ENCODE measurements at regions of chr3 and their contacts with region 1.

Region 1: GRCh38 chr3:100254168-100254777 is 6.5 kb upstream of the TBC1D23 start:
- DNase-seq: peak; percentile 43 to 58
- H3K4me3 ChIP-seq: no peak overlapping the region
- H3K27ac ChIP-seq: no peak overlapping the region
- H3K4me1 ChIP-seq: no peaks in the 10 kb centered on the region
- H3K27me3 ChIP-seq: no peaks in the 10 kb centered on the region
- CTCF ChIP-seq: peak; percentile 55 to 91 (median 83)
- EP300 ChIP-seq: no peak
- POLR2A ChIP-seq: no peak
- RAD21 ChIP-seq: peak; percentile 99 to 100

Region 2: GRCh38 chr3:99833617-99834205 is 420.6 kb before region 1 on chr3:
- CTCF ChIA-PET with region 1: interaction called, 12 read pairs
- POLR2A ChIA-PET with region 1: no interaction called
- DNase-seq: no peak
- H3K4me3 ChIP-seq: no peak overlapping the region
- H3K27ac ChIP-seq: no peak overlapping the region
- H3K4me1 ChIP-seq: peaks cover 0 to 5% (median 2%) of the 10 kb centered on the region in 4 experiments; a peak in 4 of 7 replicates
- H3K27me3 ChIP-seq: no peaks in the 10 kb centered on the region
- CTCF ChIP-seq: no peak
- EP300 ChIP-seq: no peak
- POLR2A ChIP-seq: no peak
- RAD21 ChIP-seq: no peak

Region 3: DNA sequence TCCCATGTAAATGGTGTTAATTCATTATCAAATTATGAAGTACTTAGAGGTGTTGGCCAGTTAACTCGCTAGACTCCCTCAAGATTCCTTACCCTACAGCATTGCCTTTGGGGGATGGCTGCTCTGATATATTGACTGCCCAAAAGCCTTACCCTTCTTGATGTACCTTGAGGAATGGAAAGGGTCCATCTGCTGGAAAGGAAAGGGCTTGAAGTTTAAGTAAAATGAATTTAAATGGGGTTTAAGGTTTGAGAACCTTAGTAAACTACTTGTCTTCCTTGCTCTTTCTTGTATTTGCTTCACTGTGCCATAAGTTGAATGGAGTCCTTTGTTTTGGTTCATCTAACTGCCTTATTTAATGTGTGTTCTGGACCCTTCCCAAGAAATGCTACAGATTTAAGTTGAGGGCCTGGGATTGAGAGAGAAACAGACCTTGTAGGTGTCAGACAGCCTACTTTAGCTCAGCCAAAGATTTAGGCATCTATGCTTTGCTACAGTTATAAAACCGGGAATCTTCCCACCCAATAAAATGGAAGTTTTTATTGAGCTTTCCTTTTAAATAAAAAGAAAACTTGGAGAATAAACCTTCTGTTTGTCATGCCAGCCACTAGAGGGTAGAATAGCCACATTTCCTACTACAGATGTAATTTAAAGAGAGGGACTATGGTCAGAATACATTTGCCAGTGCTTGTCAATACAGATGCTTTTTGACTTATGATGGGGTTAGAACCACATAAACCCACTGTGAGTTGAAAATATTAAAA is 411.3 kb before region 1 on chr3:
- CTCF ChIA-PET with region 1: interaction called, 16 read pairs
- POLR2A ChIA-PET with region 1: interaction called, 3 read pairs
- DNase-seq: no peak
- H3K4me3 ChIP-seq: no peak overlapping the region
- H3K27ac ChIP-seq: no peak overlapping the region
- H3K4me1 ChIP-seq: peaks cover 0 to 7% (median 4%) of the 10 kb centered on the region in 4 experiments; a peak in 3 of 7 replicates
- H3K27me3 ChIP-seq: no peaks in the 10 kb centered on the region
- CTCF ChIP-seq: peak in 2 of 3 experiments; percentile 29 to 56; a peak in 2 of 4 replicates
- EP300 ChIP-seq: no peak
- POLR2A ChIP-seq: no peak
- RAD21 ChIP-seq: peak; percentile 76 to 82

Region 4: DNA sequence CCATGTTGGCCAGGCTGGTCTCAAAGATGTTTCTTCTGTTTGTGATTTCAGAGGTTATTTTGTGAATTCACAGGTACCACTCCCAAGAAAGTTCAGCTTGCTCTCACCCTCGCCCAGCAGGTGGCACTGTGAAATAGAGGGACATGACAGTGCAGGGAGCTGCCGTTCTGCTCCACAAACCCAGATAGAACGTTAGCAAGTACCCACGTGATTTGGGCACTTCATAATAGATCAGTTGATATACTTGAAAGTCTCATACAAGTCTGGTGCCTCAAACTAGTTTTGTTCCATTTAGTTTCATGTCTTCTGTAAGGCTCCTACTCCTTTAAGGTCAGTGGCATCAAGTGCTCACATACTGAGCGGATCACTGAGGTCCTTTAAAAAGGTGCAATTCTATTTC is 185.4 kb before region 1 on chr3:
- CTCF ChIA-PET with region 1: interaction called, 27 read pairs
- POLR2A ChIA-PET with region 1: no interaction called
- DNase-seq: peak; percentile 36 to 88
- H3K4me3 ChIP-seq: no peak overlapping the region
- H3K27ac ChIP-seq: no peak overlapping the region
- H3K4me1 ChIP-seq: peaks cover 0 to 4% (median 3%) of the 10 kb centered on the region in 4 experiments; a peak in 3 of 7 replicates
- H3K27me3 ChIP-seq: no peaks in the 10 kb centered on the region
- CTCF ChIP-seq: peak; percentile 74 to 86 (median 77)
- EP300 ChIP-seq: no peak
- POLR2A ChIP-seq: no peak
- RAD21 ChIP-seq: peak; percentile 81 to 87

Region 5: GRCh38 chr3:100073899-100074307 is 180.4 kb before region 1 on chr3:
- CTCF ChIA-PET with region 1: interaction called, 27 read pairs
- POLR2A ChIA-PET with region 1: no interaction called
- DNase-seq: peak in 1 of 2 experiments; percentile 1
- H3K4me3 ChIP-seq: no peak overlapping the region; a peak in 1 of 8 replicates
- H3K27ac ChIP-seq: no peak overlapping the region
- H3K4me1 ChIP-seq: peaks cover 2 to 6% (median 4%) of the 10 kb centered on the region in 4 experiments; a peak in 3 of 7 replicates
- H3K27me3 ChIP-seq: no peaks in the 10 kb centered on the region
- CTCF ChIP-seq: no peak
- EP300 ChIP-seq: no peak
- POLR2A ChIP-seq: no peak
- RAD21 ChIP-seq: no peak; a peak in 1 of 4 replicates

Region 6: DNA sequence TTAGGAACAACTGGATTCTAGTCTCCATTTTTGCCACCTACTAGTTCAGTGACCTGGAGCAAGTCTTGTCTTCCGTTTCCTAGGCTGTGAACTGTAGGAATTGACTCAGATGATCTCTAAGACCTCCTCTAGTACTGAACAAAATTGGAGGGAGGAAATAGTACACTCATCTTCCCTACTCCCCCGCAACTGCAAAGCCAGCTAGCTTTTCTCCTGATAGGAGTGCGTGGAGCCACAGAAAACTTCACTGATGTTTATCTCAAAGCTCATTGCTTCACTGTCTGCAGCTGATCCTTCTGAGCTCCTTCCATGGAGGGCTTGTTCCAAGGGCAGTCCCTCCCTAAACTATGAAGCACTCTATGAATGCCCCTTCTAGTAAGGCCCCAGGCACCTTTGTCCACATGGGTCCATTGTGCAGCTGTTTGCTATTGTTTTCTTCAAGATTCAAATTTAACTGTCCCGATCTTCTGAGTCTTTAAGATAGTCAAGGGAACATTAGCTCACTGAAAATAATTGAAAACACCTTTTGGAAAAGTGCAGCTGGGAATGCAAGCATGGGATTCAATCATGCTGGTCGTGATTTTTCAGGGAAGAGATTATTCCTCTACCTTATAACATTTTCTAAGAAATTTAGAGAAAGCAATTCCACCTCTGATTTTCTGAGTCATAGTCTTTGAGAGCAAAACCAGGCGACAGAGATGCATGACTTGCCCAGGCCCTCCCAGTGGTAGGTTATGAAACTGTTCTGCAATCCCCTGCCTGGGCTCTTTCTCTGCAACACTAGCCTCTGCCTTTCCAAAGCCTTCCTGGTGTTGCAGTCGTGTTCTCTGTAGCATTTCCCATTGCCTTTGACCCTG is 164.2 kb before region 1 on chr3:
- CTCF ChIA-PET with region 1: interaction called, 10 read pairs
- POLR2A ChIA-PET with region 1: no interaction called
- DNase-seq: peak in 1 of 2 experiments; percentile 10
- H3K4me3 ChIP-seq: no peak overlapping the region
- H3K27ac ChIP-seq: no peak overlapping the region
- H3K4me1 ChIP-seq: peaks cover 0 to 7% (median 3%) of the 10 kb centered on the region in 4 experiments; a peak in 5 of 7 replicates
- H3K27me3 ChIP-seq: no peaks in the 10 kb centered on the region
- CTCF ChIP-seq: peak; percentile 49 to 76 (median 51)
- EP300 ChIP-seq: no peak
- POLR2A ChIP-seq: no peak
- RAD21 ChIP-seq: peak; percentile 54 to 61

Region 7: DNA sequence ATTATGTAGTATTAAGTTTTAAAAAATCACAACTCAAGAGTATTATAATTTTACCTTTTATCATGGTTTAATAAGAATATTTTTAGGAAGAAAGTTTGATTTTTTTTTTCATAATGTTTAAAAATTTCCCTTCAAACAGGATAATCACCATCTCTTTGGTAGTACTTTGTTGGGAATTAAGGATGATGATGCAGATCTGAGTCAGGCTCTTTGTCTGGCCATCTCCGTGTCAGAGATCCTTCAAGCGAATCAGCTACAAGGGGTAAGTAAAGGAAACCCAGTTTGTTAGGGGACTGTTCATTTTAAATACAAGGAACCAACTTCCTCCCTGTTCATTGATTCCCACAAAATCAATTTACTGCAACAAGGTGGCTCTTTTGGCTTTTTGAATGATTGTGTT is 43.5 kb after region 1 on chr3:
- CTCF ChIA-PET with region 1: no interaction called
- POLR2A ChIA-PET with region 1: no interaction called
- DNase-seq: no peak
- H3K4me3 ChIP-seq: no peak overlapping the region
- H3K27ac ChIP-seq: no peak overlapping the region
- H3K4me1 ChIP-seq: no peaks in the 10 kb centered on the region
- H3K27me3 ChIP-seq: no peaks in the 10 kb centered on the region
- CTCF ChIP-seq: no peak
- EP300 ChIP-seq: no peak
- POLR2A ChIP-seq: no peak
- RAD21 ChIP-seq: no peak